ENCODE measurements at regions of chr11 and their contacts with region 1.

Region 1: DNA sequence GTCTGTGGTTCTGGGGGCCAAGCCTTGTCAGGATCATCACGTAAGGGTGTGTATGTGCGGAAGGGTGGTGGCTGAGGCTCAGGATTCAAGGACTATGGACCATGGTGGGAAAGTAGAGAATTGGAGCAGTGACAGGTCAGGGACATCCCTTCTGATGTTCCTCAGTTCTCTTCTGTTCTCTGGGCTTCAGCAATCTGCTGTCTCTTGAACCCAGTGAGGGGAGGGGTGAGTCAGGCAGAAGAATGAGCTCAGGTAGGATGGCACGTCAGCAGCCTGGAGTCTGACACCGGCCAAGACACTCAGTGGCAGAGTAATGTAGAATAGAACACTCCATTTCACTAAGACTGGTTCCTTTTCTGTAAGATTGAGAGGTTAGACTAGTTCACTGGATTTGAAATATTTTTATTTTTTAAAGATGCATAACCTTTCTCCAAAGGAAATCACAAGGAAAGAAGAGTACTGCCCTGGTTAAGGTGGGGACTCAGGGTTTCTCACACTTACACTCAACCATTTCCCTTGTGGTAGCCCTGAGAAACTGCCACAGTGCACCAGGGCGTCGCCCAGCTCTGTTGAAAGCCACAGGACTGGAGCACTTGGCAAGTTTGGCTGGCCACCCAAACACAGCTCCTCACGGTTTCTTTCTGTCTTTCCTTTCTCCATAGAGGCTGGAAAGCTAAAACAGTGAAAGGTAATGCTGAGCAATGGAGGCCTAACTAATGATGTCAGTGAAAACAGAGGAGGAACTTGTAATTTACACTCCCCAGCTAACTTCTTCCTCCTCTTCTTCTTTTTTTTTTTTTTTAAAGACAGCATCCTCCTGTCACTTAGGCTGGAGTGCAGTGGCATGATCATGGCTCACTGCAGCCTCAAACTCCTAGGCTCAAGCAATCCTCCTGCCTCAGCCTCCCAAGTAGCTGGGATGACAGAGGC is 23.1 kb upstream of the MICAL2 start:
- DNase-seq: peak; percentile 33 to 72
- H3K4me3 ChIP-seq: peak overlapping the region; percentile 53
- H3K27ac ChIP-seq: peak overlapping the region; percentile 100
- H3K4me1 ChIP-seq: peaks cover 78% of the 10 kb centered on the region
- H3K27me3 ChIP-seq: no peaks in the 10 kb centered on the region
- CTCF ChIP-seq: peak; percentile 19; the same call in 1 of the 2 replicates

Region 2: DNA sequence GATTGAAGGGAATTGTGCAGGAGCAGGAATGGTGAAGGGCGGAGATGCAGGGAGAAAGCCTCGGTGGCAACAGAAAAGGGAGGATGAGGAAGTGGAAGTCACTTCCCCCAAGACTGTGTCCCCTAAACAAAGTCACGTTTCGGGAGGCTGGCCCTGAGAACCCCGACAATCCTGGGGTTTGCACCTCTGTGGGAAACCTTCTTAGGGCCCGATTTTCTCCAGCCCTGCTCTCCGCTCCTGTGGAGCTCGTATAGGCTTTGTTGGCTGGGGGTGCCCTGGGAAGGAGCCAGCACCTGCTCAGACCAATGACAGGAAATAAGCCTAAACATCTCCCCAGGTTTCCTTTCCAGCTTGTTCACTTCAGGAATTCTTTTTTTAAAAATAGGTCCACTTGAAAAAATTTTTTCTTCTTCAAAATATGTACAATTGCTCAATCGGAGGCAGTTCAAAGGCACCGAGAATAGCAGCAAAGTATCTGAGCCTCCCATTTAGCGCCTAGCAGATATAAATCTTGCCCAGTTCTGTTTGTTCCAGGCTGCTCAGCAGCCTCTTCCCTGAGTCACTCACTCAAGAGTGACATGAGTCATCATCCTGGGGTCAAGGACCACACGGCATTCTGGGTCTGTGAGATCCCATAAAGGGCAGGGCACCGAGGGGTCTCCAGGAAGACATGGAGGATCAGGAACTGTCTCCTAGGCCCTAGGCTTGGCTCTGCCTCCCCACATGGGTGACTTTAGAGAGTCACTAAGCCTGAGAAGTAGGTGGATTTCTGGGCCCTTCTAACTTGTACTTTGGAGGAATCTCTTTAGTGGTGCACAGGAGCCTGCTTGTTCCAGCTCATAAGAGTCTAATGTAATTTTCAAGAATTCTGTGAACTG is 1427.8 kb before region 1 on chr11:
- CTCF ChIA-PET with region 1: no interaction called
- POLR2A ChIA-PET with region 1: no interaction called
- intact Hi-C with region 1: loop called (anchors 10 kb)
- DNase-seq: peak; percentile 71 to 95
- H3K4me3 ChIP-seq: peak overlapping the region; percentile 14; the same call in 1 of the 2 replicates
- H3K27ac ChIP-seq: peak overlapping the region; percentile 94
- H3K4me1 ChIP-seq: peaks cover 54% of the 10 kb centered on the region
- H3K27me3 ChIP-seq: no peaks in the 10 kb centered on the region
- CTCF ChIP-seq: no peak

Region 3: DNA sequence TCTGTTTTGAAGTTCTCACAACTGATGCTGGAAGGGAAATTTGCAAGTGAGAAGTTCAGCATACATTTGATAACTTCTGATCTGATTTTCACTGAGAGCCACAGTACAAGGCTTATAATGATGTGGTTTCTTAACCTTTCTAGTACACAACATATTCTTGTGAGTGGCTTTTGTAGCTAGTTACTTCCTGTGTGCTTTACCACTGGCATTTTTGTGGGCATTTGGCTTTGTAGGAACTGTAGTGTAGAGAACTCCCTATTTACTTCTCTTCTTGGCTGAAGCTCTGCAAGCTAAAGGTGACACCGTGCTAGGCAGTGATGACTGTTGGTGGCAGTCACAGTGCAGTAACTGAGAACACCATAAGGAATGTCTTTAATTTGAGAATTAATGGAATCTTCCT is 230.7 kb before region 1 on chr11:
- CTCF ChIA-PET with region 1: no interaction called
- POLR2A ChIA-PET with region 1: no interaction called
- intact Hi-C with region 1: no loop called
- DNase-seq: no peak
- H3K4me3 ChIP-seq: no peak overlapping the region
- H3K27ac ChIP-seq: no peak overlapping the region
- H3K4me1 ChIP-seq: no peaks in the 10 kb centered on the region
- H3K27me3 ChIP-seq: no peaks in the 10 kb centered on the region
- CTCF ChIP-seq: no peak

Region 4: DNA sequence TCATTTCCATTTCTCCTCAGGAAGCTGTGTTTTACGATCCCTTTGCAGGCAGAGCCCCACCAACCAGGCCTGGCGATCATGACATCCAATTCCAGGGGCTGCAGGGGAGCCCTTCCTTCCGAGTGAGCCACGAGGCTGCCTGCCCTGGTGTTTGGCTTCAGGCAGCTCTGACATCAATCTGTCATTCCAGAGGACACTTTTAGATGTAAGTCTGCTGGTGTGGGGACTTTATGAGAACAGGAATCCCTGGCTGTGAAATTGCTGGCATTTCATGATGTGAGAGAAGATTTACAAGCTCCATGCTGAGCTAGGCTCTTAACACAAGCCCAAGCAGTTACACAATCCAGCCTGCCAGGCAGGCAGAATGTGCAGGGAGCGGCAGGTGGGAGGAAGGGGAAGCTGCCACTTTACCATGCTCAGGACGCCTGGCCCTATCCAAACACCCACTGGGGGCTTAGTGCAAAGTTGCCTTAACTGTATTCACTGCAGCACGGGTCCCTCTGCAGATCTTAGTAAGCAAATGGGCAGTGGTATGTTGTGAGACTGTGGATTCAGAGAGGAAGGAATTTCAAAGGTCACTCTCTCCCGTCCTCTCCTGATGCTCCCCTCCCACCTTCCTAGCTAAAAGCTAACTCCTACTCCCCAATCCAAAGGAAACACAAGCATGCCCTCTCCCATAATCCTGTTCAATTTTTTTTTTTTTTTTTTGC is 20.4 kb before region 1 on chr11:
- CTCF ChIA-PET with region 1: interaction called, 3 read pairs
- POLR2A ChIA-PET with region 1: interaction called, 7 read pairs
- intact Hi-C with region 1: loop called (anchors 2 kb)
- DNase-seq: peak; percentile 41 to 85
- H3K4me3 ChIP-seq: peak overlapping the region; percentile 26; the same call in 1 of the 2 replicates
- H3K27ac ChIP-seq: peak overlapping the region; percentile 94
- H3K4me1 ChIP-seq: peaks cover 39% of the 10 kb centered on the region
- H3K27me3 ChIP-seq: no peaks in the 10 kb centered on the region
- CTCF ChIP-seq: no peak

Region 5: DNA sequence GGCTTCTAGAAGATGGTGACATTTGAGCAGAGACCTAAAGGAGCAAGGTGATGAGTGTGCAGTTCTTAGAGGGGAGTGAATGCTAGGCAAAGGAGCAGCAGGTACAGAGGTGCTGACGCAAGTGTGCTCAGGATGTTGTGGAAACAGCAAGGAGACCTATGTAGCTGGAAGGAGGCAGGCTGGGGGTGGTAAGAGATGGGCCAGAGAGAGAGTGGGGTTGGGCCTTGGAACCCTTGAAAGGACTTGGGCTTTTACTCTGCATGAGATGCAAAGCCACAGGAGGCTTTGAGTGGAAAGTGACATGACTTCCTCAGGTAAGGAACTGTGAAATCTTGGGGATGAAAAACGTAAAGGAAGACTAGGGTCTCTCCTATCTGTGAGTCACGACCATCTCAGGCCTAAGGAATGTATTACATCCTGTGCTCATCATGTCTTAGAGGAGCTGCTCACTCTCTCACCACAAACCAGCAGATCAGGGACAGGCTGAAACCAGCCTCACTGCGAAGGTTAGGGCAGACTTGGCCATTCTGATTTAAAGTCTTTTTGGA is 88.4 kb after region 1 on chr11:
- CTCF ChIA-PET with region 1: no interaction called
- POLR2A ChIA-PET with region 1: interaction called, 22 read pairs
- intact Hi-C with region 1: no loop called
- DNase-seq: peak; percentile 33 to 83
- H3K4me3 ChIP-seq: no peak overlapping the region
- H3K27ac ChIP-seq: peak overlapping the region; percentile 96
- H3K4me1 ChIP-seq: peaks cover 88% of the 10 kb centered on the region
- H3K27me3 ChIP-seq: no peaks in the 10 kb centered on the region
- CTCF ChIP-seq: no peak

Region 6: DNA sequence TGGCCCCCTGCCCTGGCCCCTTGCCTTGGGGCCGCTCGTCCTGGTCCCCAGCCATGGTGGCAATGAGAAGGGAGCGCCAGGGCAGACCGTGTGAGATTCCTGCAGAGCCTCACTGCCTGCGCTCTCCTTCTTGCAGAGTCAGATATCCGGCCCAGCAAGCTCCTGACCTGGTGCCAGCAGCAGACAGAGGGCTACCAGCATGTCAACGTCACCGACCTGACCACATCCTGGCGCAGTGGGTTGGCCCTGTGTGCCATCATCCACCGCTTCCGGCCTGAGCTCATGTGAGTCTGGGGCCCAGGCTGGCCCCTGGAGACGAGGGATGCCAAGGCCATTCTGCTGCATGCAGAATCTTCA is 137.2 kb after region 1 on chr11:
- CTCF ChIA-PET with region 1: no interaction called
- POLR2A ChIA-PET with region 1: no interaction called
- intact Hi-C with region 1: loop called (anchors 5 kb)
- DNase-seq: peak; percentile 78 to 79
- H3K4me3 ChIP-seq: peak overlapping the region; percentile 41; the same call in 1 of the 2 replicates
- H3K27ac ChIP-seq: peak overlapping the region; percentile 94
- H3K4me1 ChIP-seq: peaks cover 70% of the 10 kb centered on the region
- H3K27me3 ChIP-seq: no peaks in the 10 kb centered on the region
- CTCF ChIP-seq: no peak

Region 7: GRCh38 chr11:12248338-12248737 is 161.0 kb after region 1 on chr11:
- CTCF ChIA-PET with region 1: no interaction called
- POLR2A ChIA-PET with region 1: no interaction called
- intact Hi-C with region 1: loop called (anchors 5 kb)
- DNase-seq: peak; percentile 88 to 97
- H3K4me3 ChIP-seq: no peak overlapping the region
- H3K27ac ChIP-seq: peak overlapping the region; percentile 59
- H3K4me1 ChIP-seq: peaks cover 62% of the 10 kb centered on the region
- H3K27me3 ChIP-seq: no peaks in the 10 kb centered on the region
- CTCF ChIP-seq: no peak

Region 8: GRCh38 chr11:12280838-12281565 is 193.7 kb after region 1 on chr11:
- CTCF ChIA-PET with region 1: no interaction called
- POLR2A ChIA-PET with region 1: no interaction called
- intact Hi-C with region 1: no loop called
- DNase-seq: no peak
- H3K4me3 ChIP-seq: no peak overlapping the region
- H3K27ac ChIP-seq: no peak overlapping the region
- H3K4me1 ChIP-seq: peaks cover 26% of the 10 kb centered on the region
- H3K27me3 ChIP-seq: no peaks in the 10 kb centered on the region
- CTCF ChIP-seq: no peak

Region 9: GRCh38 chr11:12331239-12331874 is 244.0 kb after region 1 on chr11:
- CTCF ChIA-PET with region 1: interaction called, 13 read pairs
- POLR2A ChIA-PET with region 1: no interaction called
- intact Hi-C with region 1: no loop called
- DNase-seq: peak; percentile 61 to 68
- H3K4me3 ChIP-seq: no peak overlapping the region
- H3K27ac ChIP-seq: no peak overlapping the region
- H3K4me1 ChIP-seq: no peaks in the 10 kb centered on the region
- H3K27me3 ChIP-seq: no peaks in the 10 kb centered on the region
- CTCF ChIP-seq: peak; percentile 82